ENCODE measurements at regions of chr2 and their contacts with region 1.

Region 1: DNA sequence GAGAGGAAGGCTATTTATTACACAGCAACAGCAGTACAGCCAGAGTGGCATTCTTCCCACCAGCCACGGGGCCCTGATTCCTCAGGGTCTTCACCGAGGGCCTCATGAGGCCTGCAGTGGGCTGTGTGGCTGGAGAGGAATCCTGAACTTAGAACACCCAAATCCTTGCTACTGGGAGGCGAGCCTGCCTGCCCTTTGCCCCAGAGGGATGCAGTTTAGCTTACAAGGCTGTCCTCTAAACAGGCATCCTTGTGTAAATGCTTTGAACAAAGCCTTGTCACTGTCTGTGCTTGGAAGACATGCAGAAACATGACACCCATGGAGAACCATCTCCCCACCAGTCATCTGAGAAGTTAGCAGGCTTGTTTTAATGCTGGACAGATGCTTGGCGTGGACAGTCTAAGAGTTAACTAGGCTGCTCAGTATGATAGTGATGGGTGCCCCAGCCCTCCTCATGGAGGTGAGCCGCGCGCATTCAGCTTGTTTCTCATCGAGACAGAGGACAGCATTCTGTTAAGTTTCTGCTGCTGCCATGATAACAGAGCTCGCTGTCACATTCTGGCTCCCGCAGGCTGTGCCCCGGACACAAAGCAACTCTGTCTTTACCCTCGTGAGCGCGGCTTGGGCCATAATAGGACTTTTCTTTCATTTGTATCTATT is 42.9 kb downstream of the ADI1 start:
- DNase-seq: peak in 9 of 10 donors; percentile 50 to 82 (median 69)
- H3K4me3 ChIP-seq: peak overlapping the region in 15 of 59 donors; percentile 1 to 42 (median 20)
- H3K27ac ChIP-seq: peak overlapping the region; percentile 83 to 100 (median 96)
- H3K27me3 ChIP-seq: no peaks in the 10 kb centered on the region
- CTCF ChIP-seq: peak in 1 of 56 donors; percentile 11

Region 2: DNA sequence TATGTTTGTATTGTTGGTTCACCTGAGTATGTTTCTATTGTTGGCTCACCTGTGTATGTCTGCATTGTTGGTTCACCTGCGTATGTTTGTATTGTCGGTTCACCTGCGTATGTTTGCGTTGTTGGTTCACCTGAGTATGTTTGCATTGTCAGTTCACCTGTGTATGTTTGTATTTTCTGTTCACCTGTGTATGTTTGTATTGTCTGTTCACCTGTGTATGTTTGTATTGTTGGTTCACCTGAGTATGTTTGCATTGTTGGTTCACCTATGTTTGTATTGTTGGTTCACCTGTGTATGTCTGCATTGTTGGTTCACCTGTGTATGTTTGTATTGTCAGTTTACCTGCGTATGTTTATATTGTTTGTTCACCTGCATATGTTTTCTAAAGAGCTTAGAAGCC is 28.3 kb after region 1 on chr2:
- intact Hi-C with region 1: loop called in 1 of 2 experiments (anchors 1 kb)
- DNase-seq: no peak
- H3K4me3 ChIP-seq: no peak overlapping the region
- H3K27ac ChIP-seq: no peak overlapping the region
- H3K27me3 ChIP-seq: no peaks in the 10 kb centered on the region
- CTCF ChIP-seq: no peak

Region 3: DNA sequence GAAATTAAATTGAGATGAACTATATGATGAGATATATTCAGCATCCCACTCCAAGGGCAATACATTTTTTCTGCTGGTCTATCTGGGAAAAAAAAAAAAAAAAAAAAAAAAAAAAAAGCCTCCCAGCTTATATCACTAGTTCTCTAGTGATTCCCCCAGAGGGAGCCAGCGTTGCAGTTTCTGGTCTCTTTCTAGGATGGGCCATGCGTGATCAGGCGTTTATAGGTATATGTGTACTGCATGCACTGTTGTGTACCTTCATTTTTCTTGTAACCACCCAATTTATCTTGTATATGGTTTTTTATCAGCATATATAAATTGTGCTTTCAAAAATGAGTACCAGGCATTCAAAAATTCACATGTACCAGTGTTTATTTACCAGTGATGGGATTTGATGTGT is 262.0 kb after region 1 on chr2:
- intact Hi-C with region 1: no loop called
- DNase-seq: no peak
- H3K4me3 ChIP-seq: no peak overlapping the region
- H3K27ac ChIP-seq: no peak overlapping the region
- H3K27me3 ChIP-seq: peaks cover 0 to 40% (median 10%) of the 10 kb centered on the region in 45 donors
- CTCF ChIP-seq: no peak